AG04450 (cell line): ENCODE measurements at regions of chr1 and their contacts with region 1.

Region 1: DNA sequence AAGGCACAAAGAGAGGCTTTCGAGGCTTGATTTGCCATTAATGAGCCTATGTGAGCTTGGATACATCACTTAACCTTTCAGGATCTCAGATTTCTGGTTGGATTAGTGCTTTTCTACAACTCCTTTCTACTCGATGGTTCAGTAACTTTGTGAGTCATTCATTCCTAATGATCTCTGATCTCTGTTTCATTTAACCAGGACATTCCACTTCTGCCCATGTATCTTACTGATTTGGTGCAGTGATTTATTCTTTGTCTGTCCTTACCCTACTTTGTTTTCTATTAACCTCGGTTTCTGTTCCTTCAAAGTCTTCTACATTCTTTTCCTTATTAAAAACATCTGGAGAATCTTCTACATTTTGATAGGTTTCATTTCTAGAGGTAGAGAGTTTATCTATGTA is 94.6 kb upstream of the ZBTB18 start:
- DNase-seq: no peak
- H3K4me3 ChIP-seq: no peak overlapping the region
- H3K27ac ChIP-seq: no peak overlapping the region
- H3K27me3 ChIP-seq: no peaks in the 10 kb centered on the region
- CTCF ChIP-seq: no peak

Region 2: GRCh38 chr1:243482141-243483022 is 474.1 kb before region 1 on chr1:
- CTCF ChIA-PET with region 1: no interaction called
- POLR2A ChIA-PET with region 1: interaction called, 11 read pairs
- DNase-seq: no peak
- H3K4me3 ChIP-seq: no peak overlapping the region
- H3K27ac ChIP-seq: no peak overlapping the region
- H3K27me3 ChIP-seq: no peaks in the 10 kb centered on the region
- CTCF ChIP-seq: no peak

Region 3: DNA sequence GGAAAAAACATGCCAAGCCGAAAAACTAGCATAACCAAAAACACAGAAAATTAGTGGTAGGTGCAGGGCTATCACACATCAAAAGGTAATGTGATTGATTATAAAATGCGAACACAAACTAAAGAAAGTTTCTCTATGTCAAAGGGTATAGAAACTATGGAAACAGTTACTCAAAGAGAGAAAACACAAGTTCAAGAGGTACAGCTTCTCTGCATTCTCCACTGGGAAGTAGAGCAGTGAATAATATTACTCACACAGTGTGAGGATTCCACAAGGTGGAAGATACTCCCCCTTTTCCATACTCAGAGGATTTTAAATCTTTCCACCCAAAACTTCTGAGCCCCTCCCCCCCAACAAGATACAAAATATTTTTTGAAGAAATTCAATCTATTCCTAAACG is 125.0 kb before region 1 on chr1:
- CTCF ChIA-PET with region 1: interaction called, 10 read pairs
- POLR2A ChIA-PET with region 1: no interaction called
- DNase-seq: no peak
- H3K4me3 ChIP-seq: no peak overlapping the region
- H3K27ac ChIP-seq: no peak overlapping the region
- H3K27me3 ChIP-seq: no peaks in the 10 kb centered on the region
- CTCF ChIP-seq: no peak

Region 4: DNA sequence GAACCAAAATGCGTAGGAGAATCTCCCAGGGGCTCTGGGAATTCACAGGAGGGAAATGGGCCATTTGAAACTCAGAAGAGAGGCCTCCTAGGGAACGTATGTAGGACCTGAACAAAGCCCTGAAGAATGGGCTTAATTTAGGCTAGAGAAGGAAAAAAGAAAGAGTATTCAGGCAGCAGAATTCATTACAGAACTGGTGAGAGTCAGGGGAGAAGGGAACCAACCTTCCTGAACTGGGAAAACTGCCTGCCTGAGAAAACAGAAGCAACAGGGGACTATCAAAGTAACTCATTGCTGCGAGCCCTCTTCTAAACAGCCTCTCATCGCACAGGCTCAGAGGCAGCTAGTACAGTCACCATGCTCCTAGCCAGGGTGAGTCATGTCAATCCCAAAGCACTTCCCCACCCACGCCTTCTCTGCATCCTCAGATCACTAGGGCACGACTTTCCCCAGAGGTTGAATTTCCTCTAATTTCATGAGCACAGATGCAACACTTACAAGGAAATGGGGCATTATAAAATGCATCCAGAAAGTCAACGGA is 397.2 kb after region 1 on chr1:
- CTCF ChIA-PET with region 1: no interaction called
- POLR2A ChIA-PET with region 1: no interaction called
- DNase-seq: peak; percentile 83
- H3K4me3 ChIP-seq: no peak overlapping the region
- H3K27ac ChIP-seq: peak overlapping the region; percentile 76
- H3K27me3 ChIP-seq: no peaks in the 10 kb centered on the region
- CTCF ChIP-seq: no peak